T-cell (primary cell): ENCODE measurements at regions of chr10 and their contacts with region 1.

Region 1: DNA sequence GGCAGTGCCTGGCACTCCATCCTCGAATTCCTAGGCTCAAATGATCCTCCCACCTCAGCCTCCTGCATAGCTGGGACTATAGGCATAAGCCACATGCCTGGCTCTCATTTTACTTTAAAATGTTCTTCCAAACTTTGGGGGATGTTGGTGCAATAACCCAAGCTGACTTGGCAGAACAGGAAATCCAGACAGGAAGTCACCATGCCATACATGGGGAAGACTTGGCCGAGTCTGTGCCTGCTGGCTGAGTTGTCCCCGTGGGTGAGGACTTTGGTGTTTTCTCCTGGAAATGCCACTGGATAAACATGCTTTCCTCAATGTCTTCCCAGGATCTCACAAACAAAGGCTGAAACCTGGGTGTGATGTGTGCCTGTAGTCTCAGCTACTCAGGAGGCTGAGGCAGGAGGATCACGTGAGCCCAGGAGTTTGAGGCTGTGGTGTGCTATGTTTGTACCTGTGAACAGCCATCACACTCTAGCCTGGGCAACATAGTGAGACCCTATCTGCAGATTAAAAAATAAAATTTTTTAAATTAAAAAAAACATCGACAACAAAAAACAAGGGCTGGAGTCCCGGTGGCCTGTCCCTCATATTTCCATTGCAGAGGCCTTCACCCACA is 19.8 kb downstream of the HKDC1 start:
- DNase-seq: no peak
- ATAC-seq: no peak
- H3K4me3 ChIP-seq: no peak overlapping the region
- H3K4me3 Mint-ChIP-seq: no peak overlapping the region
- H3K27ac ChIP-seq: no peak overlapping the region
- H3K27ac Mint-ChIP-seq: no peak overlapping the region
- H3K4me1 ChIP-seq: peaks cover 2 to 7% of the 10 kb centered on the region in 2 experiments
- H3K4me1 Mint-ChIP-seq: peaks cover 4 to 11% (median 9%) of the 10 kb centered on the region in 3 donors
- H3K27me3 ChIP-seq: no peaks in the 10 kb centered on the region
- H3K27me3 Mint-ChIP-seq: no peaks in the 10 kb centered on the region

Region 2: GRCh38 chr10:69389827-69390490 is 150.0 kb after region 1 on chr10:
- CTCF ChIA-PET with region 1: interaction called, 6 to 11 read pairs
- POLR2A ChIA-PET with region 1: interaction called in 1 of 2 experiments, 4 read pairs
- DNase-seq: no peak
- ATAC-seq: peak in 1 of 4 experiments; percentile 25
- H3K4me3 ChIP-seq: no peak overlapping the region
- H3K4me3 Mint-ChIP-seq: no peak overlapping the region
- H3K27ac ChIP-seq: no peak overlapping the region
- H3K27ac Mint-ChIP-seq: peak overlapping the region; percentile 74 to 83
- H3K4me1 ChIP-seq: peaks cover 0 to 21% of the 10 kb centered on the region in 2 experiments
- H3K4me1 Mint-ChIP-seq: peaks cover 15 to 31% (median 18%) of the 10 kb centered on the region in 3 donors
- H3K27me3 ChIP-seq: no peaks in the 10 kb centered on the region
- H3K27me3 Mint-ChIP-seq: no peaks in the 10 kb centered on the region